ENCODE measurements at regions of chr7 and their contacts with region 1.

Region 1: GRCh38 chr7:30379131-30379530 is 94.7 kb downstream of the ZNRF2 start:
- DNase-seq: no peak
- ATAC-seq: no peak
- H3K4me3 ChIP-seq: no peak overlapping the region
- H3K27ac ChIP-seq: no peak overlapping the region
- H3K4me1 ChIP-seq: no peaks in the 10 kb centered on the region
- H3K27me3 ChIP-seq: no peaks in the 10 kb centered on the region
- CTCF ChIP-seq: no peak

Region 2: GRCh38 chr7:30331338-30331737 is 47.8 kb before region 1 on chr7:
- CTCF ChIA-PET with region 1: no interaction called
- POLR2A ChIA-PET with region 1: no interaction called
- in situ Hi-C with region 1: no loop called
- intact Hi-C with region 1: no loop called
- DNase-seq: no peak
- ATAC-seq: no peak
- H3K4me3 ChIP-seq: no peak overlapping the region
- H3K27ac ChIP-seq: no peak overlapping the region
- H3K4me1 ChIP-seq: peaks cover 7% of the 10 kb centered on the region
- H3K27me3 ChIP-seq: no peaks in the 10 kb centered on the region
- CTCF ChIP-seq: no peak

Region 3: GRCh38 chr7:30348083-30348560 is 31.0 kb before region 1 on chr7:
- CTCF ChIA-PET with region 1: no interaction called
- POLR2A ChIA-PET with region 1: interaction called, 17 read pairs
- in situ Hi-C with region 1: no loop called
- intact Hi-C with region 1: no loop called
- DNase-seq: peak; percentile 64
- ATAC-seq: peak; percentile 89
- H3K4me3 ChIP-seq: peak overlapping the region in 1 of 2 experiments; percentile 10; a peak in 1 of 4 replicates
- H3K27ac ChIP-seq: peak overlapping the region; percentile 36
- H3K4me1 ChIP-seq: peaks cover 43% of the 10 kb centered on the region
- H3K27me3 ChIP-seq: no peaks in the 10 kb centered on the region
- CTCF ChIP-seq: no peak

Region 4: DNA sequence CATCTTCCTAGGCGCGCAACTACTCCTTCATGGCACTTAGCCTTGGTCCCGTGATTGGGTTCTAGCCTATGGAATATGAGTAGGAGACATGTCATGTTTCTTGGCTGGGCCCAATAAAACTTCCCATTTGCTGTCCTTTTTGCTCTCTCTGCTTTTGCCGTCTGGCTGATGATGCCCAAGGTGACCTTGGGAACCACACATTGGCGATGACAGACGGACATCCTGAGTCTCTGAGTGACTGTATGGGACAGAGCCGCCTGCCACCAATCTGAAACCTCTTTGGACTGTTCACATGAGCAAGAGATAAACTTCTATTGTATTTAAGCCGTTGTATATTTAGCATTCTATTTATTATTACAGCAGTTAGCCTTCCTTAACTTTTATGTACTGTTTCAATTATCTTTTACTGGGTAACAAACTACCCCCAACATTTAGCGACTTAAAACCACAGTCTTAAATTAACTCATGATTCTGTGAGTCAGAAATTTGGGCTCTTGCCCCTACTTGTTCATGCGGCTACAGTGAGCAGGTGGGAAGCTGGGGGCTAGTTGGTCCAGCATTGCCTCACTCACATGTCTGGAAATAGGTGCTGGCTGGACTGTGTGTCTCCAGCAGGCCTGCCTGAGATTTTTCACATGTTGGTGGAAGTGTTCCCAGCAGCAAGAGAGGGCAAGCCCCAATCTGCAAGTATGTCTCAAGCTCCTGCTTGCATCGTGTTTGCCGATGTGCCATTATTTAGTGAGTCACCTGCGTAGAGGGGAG is 27.7 kb after region 1 on chr7:
- CTCF ChIA-PET with region 1: no interaction called
- POLR2A ChIA-PET with region 1: no interaction called
- in situ Hi-C with region 1: no loop called
- intact Hi-C with region 1: no loop called
- DNase-seq: no peak
- ATAC-seq: no peak
- H3K4me3 ChIP-seq: no peak overlapping the region
- H3K27ac ChIP-seq: no peak overlapping the region
- H3K4me1 ChIP-seq: no peaks in the 10 kb centered on the region
- H3K27me3 ChIP-seq: no peaks in the 10 kb centered on the region
- CTCF ChIP-seq: no peak

Region 5: DNA sequence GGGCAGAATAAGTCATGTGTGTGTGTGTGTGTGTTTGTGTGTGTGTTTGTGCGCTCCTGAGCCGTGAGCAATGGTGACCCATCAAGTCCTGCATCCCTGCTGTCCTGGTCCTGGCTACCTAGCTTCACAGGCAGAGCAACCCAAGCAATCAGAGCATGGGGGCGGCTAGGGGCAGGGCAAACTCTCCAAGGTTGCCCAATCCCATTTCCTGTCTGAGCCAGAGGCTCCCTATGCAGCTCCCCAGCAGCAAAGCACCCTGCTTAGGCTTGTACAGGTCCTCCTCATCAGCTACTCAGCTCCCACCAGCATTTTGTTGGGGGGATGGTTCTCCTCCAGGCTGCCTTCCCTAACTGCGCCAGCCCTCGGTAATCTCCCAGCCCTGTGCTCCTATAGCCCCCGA is 334.3 kb after region 1 on chr7:
- CTCF ChIA-PET with region 1: interaction called, 11 read pairs
- POLR2A ChIA-PET with region 1: no interaction called
- in situ Hi-C with region 1: no loop called
- intact Hi-C with region 1: no loop called
- DNase-seq: no peak
- ATAC-seq: no peak
- H3K4me3 ChIP-seq: no peak overlapping the region
- H3K27ac ChIP-seq: no peak overlapping the region
- H3K4me1 ChIP-seq: no peaks in the 10 kb centered on the region
- H3K27me3 ChIP-seq: peaks cover 2% of the 10 kb centered on the region; the same call in 1 of the 2 replicates
- CTCF ChIP-seq: no peak

Measured in Panc1 (cell line).